Heart right ventricle (tissue), 16 donors: ENCODE measurements at regions of chr19 and their contacts with region 1.

Region 1: DNA sequence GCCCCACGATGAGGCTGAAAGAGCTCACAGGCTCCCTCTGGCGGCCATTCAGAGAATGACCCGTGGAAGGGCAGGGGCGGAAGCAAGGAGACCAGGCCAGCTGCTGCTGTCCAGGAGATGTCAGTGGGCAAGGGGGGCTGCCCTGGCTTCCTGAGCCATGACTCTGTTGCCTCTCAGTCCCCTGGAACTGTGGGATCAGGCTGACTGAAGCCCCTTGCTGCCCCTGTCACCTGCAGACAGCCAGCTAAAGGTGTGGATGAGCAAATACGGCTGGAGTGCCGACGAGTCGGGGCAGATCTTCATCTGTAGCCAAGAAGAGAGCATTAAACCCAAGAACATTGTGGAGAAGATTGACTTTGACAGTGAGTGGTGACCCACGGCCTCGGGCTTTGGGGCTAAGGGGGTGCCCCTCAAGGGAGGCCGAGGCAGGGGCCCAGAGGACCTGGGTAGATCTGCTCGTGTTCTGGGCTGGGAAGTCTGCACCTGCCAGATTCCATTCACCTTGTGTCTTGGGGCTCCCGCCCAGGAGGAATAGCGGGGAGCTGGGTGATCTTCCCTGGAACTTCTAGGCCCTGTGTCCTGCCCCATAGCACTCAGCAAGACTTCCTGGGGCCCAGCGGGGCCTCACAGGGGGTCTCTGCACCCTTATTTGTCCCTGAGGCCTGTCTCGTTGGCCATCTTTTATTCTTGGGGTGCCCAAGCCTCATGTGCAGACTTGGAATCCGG is 12.5 kb upstream of the ACTN4 start:
- DNase-seq: peak; percentile 78 to 82
- ATAC-seq: peak in 7 of 8 donors; percentile 41 to 65 (median 47)
- H3K4me3 ChIP-seq: no peak overlapping the region
- H3K27ac ChIP-seq: peak overlapping the region in 8 of 10 donors; percentile 5 to 89 (median 58)
- H3K4me1 ChIP-seq: peaks cover 0 to 38% (median 29%) of the 10 kb centered on the region in 9 donors
- H3K27me3 ChIP-seq: no peaks in the 10 kb centered on the region
- CTCF ChIP-seq: peak; percentile 87 to 98 (median 95)

Region 2: GRCh38 chr19:38402967-38403861 is 231.7 kb before region 1 on chr19 and contains the start of gene FAM98C:
- intact Hi-C with region 1: loop called (anchors 2 to 10 kb)
- DNase-seq: peak; percentile 93 to 97
- ATAC-seq: peak; percentile 98 to 100 (median 99)
- H3K4me3 ChIP-seq: peak within 1 kb of the TSS; percentile 68 to 99 (median 87)
- H3K27ac ChIP-seq: peak within 1 kb of the TSS in 9 of 10 donors; percentile 68 to 95 (median 82)
- H3K4me1 ChIP-seq: peaks cover 0 to 17% (median 11%) of the 10 kb centered on the region in 9 donors
- H3K27me3 ChIP-seq: peaks cover 8 to 35% (median 27%) of the 10 kb centered on the region in 7 donors
- CTCF ChIP-seq: peak; percentile 95 to 100 (median 100)
- total RNA-seq, gene FAM98C: 9.8 to 16.1 (median 12.2) TPM

Region 3: GRCh38 chr19:38514812-38515633 is 119.9 kb before region 1 on chr19:
- intact Hi-C with region 1: loop called in 1 of 10 experiments (anchors 10 kb)
- DNase-seq: peak; percentile 32 to 67
- ATAC-seq: peak in 7 of 8 donors; percentile 73 to 85 (median 79)
- H3K4me3 ChIP-seq: peak overlapping the region in 1 of 10 donors; percentile 18
- H3K27ac ChIP-seq: no peak overlapping the region
- H3K4me1 ChIP-seq: peaks cover 0 to 7% (median 0%) of the 10 kb centered on the region in 9 donors
- H3K27me3 ChIP-seq: peaks cover 0 to 34% (median 6%) of the 10 kb centered on the region in 7 donors
- CTCF ChIP-seq: peak; percentile 61 to 90 (median 85)

Region 4: GRCh38 chr19:38544034-38544958 is 90.6 kb before region 1 on chr19:
- intact Hi-C with region 1: loop called in 4 of 10 experiments (anchors 2 to 10 kb)
- DNase-seq: peak; percentile 38 to 50
- ATAC-seq: peak; percentile 70 to 86 (median 80)
- H3K4me3 ChIP-seq: peak overlapping the region in 3 of 10 donors; percentile 6 to 17 (median 12)
- H3K27ac ChIP-seq: no peak overlapping the region
- H3K4me1 ChIP-seq: peaks cover 0 to 11% (median 6%) of the 10 kb centered on the region in 9 donors
- H3K27me3 ChIP-seq: no peaks in the 10 kb centered on the region
- CTCF ChIP-seq: peak; percentile 39 to 75 (median 63)

Region 5: DNA sequence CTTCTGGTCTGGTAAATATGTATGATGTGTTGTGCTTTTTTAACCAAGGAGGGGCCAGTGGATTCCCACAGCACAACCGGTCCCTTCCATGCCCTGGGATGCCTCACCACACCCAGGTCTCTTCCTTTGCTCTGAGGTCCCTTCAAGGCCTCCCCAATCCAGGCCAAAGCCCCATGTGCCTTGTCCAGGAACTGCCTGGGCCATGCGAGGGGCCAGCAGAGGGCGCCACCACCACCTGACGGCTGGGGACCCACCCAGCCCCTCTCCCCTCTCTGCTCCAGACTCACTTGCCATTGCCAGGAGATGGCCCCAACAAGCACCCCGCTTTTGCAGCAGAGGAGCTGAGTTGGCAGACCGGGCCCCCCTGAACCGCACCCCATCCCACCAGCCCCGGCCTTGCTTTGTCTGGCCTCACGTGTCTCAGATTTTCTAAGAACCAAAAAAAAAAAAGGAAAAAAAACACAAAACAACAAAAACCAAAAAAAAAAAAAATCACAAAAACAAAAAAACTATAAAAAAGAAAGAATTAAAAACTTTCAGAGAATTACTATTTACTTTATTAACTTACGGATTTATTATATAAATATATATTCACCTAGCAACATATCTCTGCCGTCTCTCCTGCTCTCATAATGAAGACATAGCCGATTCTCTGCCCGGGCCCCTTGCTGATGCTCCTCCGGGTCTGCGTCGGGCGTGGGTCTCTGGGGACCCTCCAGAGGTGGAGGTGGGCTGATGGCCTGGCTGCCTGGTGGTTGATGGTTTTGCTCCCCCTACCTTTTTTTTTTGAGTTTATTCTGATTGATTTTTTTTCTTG is 94.9 kb after region 1 on chr19:
- intact Hi-C with region 1: loop called in 1 of 10 experiments (anchors 5 kb)
- DNase-seq: peak; percentile 66 to 80
- ATAC-seq: peak; percentile 27 to 56 (median 42)
- H3K4me3 ChIP-seq: no peak overlapping the region
- H3K27ac ChIP-seq: peak overlapping the region; percentile 2 to 86 (median 69)
- H3K4me1 ChIP-seq: peaks cover 9 to 89% (median 48%) of the 10 kb centered on the region in 9 donors
- H3K27me3 ChIP-seq: no peaks in the 10 kb centered on the region
- CTCF ChIP-seq: peak; percentile 60 to 90 (median 79)

Region 6: DNA sequence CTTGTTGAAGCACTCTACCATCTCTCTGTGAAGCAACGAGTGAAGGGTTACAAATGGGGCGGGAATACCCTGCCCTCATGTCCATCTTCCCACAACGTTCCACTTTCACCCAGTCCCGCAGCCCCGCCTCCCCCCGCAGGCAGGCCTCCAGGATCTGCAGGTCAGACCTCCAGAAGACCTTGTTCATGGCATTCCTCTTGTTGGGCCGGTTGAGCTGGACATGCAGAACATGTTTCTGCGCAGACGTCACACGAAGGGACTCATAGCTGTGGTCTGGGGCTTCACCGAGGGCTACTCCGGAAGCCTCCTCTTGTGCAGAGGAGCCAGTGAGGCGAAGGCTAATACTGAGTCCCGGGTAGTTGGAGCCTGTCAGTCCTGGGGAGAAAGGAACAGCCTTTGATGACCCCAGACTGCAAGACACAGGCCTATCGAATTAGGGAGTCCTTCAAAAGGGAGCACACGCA is 196.3 kb after region 1 on chr19:
- intact Hi-C with region 1: loop called in 3 of 10 experiments (anchors 10 kb)
- DNase-seq: peak; percentile 54 to 75
- ATAC-seq: peak; percentile 35 to 67 (median 62)
- H3K4me3 ChIP-seq: peak overlapping the region; percentile 64 to 92 (median 74)
- H3K27ac ChIP-seq: peak overlapping the region; percentile 86 to 99 (median 94)
- H3K4me1 ChIP-seq: peaks cover 8 to 55% (median 40%) of the 10 kb centered on the region in 9 donors
- H3K27me3 ChIP-seq: no peaks in the 10 kb centered on the region
- CTCF ChIP-seq: no peak

Region 7: GRCh38 chr19:38849860-38850435 is 215.0 kb after region 1 on chr19 and contains the start of gene HNRNPL:
- intact Hi-C with region 1: loop called in 1 of 10 experiments (anchors 10 kb)
- DNase-seq: peak; percentile 99 to 100
- ATAC-seq: peak; percentile 72 to 86 (median 80)
- H3K4me3 ChIP-seq: peak within 1 kb of the TSS; percentile 80 to 98 (median 90)
- H3K27ac ChIP-seq: peak within 1 kb of the TSS; percentile 99 to 100 (median 100)
- H3K4me1 ChIP-seq: peaks cover 17 to 58% (median 46%) of the 10 kb centered on the region in 9 donors
- H3K27me3 ChIP-seq: no peaks in the 10 kb centered on the region
- CTCF ChIP-seq: peak in 8 of 9 donors; percentile 45 to 74 (median 64)
- total RNA-seq, gene HNRNPL: 134 to 196 (median 170) TPM